ENCODE measurements at regions of chr11 and their contacts with region 1.

Region 1: GRCh38 chr11:102346748-102347461 is at the start of gene BIRC2:
- DNase-seq: peak; percentile 98
- ATAC-seq: peak; percentile 99
- total RNA-seq, gene BIRC2: 30.4 TPM

Region 2: GRCh38 chr11:102287964-102288724 is 58.8 kb before region 1 on chr11:
- intact Hi-C with region 1: loop called (anchors 10 kb)
- DNase-seq: no peak
- ATAC-seq: peak; percentile 92

Region 3: DNA sequence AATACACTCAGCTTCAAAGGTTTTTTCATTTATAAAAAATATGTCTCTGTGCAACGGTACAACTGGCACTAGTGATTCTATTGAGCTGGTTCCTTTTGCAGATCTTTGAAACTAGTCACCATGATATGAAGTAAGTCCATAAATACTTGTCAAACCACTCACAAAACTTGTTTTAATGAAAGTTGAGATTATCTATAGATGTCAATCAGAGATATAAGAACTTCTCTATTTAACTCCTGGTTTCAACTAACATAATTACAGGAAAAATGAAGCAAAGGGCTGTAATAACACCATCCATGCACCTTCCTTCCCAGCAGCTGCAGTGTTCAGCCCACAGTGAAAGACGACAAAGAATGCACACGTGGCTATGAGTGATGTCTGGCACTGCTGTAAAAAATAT is 61.0 kb after region 1 on chr11:
- intact Hi-C with region 1: no loop called
- DNase-seq: no peak
- ATAC-seq: no peak

Region 4: DNA sequence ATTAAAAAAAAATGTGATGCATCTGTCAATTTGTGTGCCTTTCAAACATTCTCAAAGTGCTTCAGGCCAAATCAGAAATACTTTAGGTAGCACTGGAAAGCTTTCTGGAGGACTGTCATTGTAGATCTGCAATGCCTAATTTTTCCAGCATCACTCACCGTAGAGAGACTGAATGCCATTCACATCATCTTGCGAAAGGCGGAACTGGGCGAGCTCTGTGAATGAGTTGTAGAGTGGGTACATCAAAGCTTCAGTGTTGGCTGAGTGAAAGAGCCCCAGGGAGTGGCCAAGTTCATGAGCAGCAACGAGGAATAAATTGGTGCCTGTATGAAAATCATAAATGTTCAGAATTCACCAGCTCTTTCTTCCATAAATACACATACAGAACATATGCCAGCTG is 429.5 kb after region 1 on chr11:
- intact Hi-C with region 1: no loop called
- DNase-seq: no peak
- ATAC-seq: no peak